PC-9 (cell line): ENCODE measurements at regions of chr6 and their contacts with region 1.

Region 1: GRCh38 chr6:20092071-20092566 is 120.2 kb downstream of the MBOAT1 start:
- DNase-seq: peak; percentile 17 to 49
- H3K4me3 ChIP-seq: no peak overlapping the region
- H3K27ac ChIP-seq: no peak overlapping the region
- H3K4me1 ChIP-seq: no peaks in the 10 kb centered on the region
- H3K27me3 ChIP-seq: no peaks in the 10 kb centered on the region
- CTCF ChIP-seq: peak; percentile 87

Region 2: GRCh38 chr6:20126789-20127653 is 34.9 kb after region 1 on chr6:
- CTCF ChIA-PET with region 1: interaction called, 14 read pairs
- POLR2A ChIA-PET with region 1: no interaction called
- intact Hi-C with region 1: loop called (anchors 1 kb)
- DNase-seq: peak; percentile 40 to 62
- H3K4me3 ChIP-seq: no peak overlapping the region
- H3K27ac ChIP-seq: no peak overlapping the region
- H3K4me1 ChIP-seq: no peaks in the 10 kb centered on the region
- H3K27me3 ChIP-seq: no peaks in the 10 kb centered on the region
- CTCF ChIP-seq: peak; percentile 91

Region 3: GRCh38 chr6:20135677-20136268 is 43.7 kb after region 1 on chr6:
- CTCF ChIA-PET with region 1: interaction called, 10 read pairs
- POLR2A ChIA-PET with region 1: no interaction called
- intact Hi-C with region 1: no loop called
- DNase-seq: no peak
- H3K4me3 ChIP-seq: no peak overlapping the region
- H3K27ac ChIP-seq: no peak overlapping the region
- H3K4me1 ChIP-seq: no peaks in the 10 kb centered on the region
- H3K27me3 ChIP-seq: no peaks in the 10 kb centered on the region
- CTCF ChIP-seq: no peak

Region 4: DNA sequence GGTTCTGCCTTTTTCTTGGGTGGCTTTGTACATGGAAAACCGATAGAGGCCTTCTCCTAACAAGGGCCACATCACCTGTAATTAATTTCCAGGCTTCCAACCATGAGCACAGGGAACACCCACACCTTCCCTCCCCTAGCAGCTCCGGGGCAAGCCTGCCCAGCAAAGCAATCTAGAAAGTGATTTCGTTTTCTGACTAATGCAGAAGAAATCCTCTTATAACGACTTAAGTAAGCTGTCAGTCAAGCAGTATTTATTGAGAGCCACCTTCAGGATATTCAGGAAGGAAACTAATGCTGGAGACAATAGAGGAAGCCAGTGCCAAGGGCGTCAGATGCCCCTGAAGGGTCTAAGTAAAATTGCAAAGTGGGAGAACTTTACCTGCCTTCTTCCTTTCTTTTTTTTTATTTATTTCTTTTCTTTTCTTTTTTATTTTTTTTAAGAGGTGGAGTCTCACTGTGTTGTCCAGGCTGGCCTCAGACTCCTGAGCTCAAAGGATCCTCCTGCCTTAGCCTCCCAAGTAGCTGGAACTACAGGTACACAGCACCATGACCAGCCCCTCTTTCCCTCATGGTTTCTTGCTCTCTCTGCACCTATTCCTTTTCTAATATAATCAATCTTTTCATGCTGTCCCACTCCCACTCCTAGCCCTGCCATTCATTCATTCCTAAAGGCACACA is 187.6 kb after region 1 on chr6:
- CTCF ChIA-PET with region 1: no interaction called
- POLR2A ChIA-PET with region 1: no interaction called
- intact Hi-C with region 1: loop called (anchors 5 kb)
- DNase-seq: peak; percentile 24 to 42
- H3K4me3 ChIP-seq: no peak overlapping the region
- H3K27ac ChIP-seq: no peak overlapping the region
- H3K4me1 ChIP-seq: no peaks in the 10 kb centered on the region
- H3K27me3 ChIP-seq: no peaks in the 10 kb centered on the region
- CTCF ChIP-seq: no peak

Region 5: DNA sequence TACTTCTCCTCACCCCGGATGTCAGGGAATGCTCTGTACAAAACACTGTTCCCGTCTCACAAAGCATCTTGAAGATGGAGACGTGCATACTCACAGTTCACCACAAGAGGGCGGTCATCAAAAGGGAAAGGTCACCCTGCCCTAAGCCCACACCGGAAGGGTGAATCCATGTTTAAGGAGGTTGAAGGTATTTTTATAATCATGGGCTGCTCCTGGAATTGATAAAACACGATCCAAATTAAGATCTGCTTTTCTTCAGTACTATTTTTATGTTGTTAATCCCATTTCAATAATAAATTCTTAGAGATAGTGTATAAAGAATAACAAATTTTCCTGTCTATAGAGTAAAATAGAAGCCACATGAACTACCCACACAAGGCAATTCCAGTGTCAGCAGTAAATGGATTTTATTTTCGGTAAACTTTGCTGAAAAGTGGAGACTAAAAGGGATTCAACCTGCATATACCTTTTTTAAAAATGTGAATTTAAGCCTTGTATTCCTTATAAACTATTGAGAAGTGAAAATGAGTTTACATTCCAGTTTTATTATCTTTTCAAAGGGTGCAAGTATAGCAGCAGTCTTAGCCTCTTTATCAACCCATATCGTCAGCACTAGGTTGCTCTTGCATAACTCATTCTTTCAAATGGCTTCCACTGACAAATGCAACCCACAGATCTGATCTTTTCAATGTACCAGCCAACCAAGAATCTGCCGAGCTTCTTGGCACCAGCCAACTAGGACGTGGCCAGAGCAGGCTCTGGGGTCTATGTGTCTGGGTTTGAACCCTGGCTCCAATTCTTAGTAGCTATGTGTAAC is 199.9 kb after region 1 on chr6:
- CTCF ChIA-PET with region 1: interaction called, 3 read pairs
- POLR2A ChIA-PET with region 1: no interaction called
- intact Hi-C with region 1: loop called (anchors 1 kb)
- DNase-seq: peak; percentile 53 to 71
- H3K4me3 ChIP-seq: no peak overlapping the region
- H3K27ac ChIP-seq: no peak overlapping the region
- H3K4me1 ChIP-seq: no peaks in the 10 kb centered on the region
- H3K27me3 ChIP-seq: no peaks in the 10 kb centered on the region
- CTCF ChIP-seq: peak; percentile 95

Region 6: DNA sequence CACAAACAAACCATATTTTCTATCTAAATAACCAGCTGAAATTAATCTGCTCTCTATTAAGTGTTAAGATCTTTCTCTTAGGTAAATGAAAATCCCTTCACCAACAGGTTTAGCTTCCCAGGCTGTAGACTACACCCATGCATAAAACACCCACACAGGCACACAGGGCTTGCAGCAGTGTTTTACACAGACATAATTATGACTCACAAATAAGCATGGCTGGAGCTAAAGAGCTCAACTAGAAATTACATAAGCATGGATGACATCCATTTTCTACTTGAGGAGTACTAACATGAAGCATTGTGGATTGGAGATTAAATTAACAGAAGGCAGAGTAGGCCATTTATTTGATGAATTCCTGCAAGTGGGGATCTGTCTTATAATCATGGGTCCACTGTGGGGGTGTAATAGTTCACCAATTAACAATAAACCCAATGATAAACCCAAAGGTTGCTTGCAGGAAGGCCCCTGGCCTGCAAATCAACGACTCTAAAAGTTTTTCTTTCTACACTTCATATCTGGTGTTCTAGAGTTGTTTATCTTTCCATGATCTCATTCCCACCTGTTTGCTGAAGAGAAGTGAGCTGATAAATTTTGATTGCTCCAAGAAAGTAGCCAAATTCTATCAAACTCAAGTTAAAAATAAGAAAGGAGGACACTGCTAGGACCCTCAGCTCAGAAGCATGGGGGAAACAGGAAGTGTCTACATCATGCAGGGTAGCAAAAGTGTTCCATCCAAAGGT is 275.8 kb after region 1 on chr6:
- CTCF ChIA-PET with region 1: no interaction called
- POLR2A ChIA-PET with region 1: no interaction called
- intact Hi-C with region 1: no loop called
- DNase-seq: no peak
- H3K4me3 ChIP-seq: no peak overlapping the region
- H3K27ac ChIP-seq: no peak overlapping the region
- H3K4me1 ChIP-seq: no peaks in the 10 kb centered on the region
- H3K27me3 ChIP-seq: no peaks in the 10 kb centered on the region
- CTCF ChIP-seq: no peak

Region 7: GRCh38 chr6:20534295-20535262 is 442.5 kb after region 1 on chr6 and contains the start of gene CDKAL1:
- CTCF ChIA-PET with region 1: no interaction called
- POLR2A ChIA-PET with region 1: no interaction called
- intact Hi-C with region 1: loop called (anchors 1 kb)
- DNase-seq: peak; percentile 79 to 81
- H3K4me3 ChIP-seq: peak within 1 kb of the TSS; percentile 77
- H3K27ac ChIP-seq: peak within 1 kb of the TSS; percentile 58
- H3K4me1 ChIP-seq: peaks cover 13% of the 10 kb centered on the region
- H3K27me3 ChIP-seq: no peaks in the 10 kb centered on the region
- CTCF ChIP-seq: no peak
- total RNA-seq, gene CDKAL1: 11.5 and 16.1 TPM in 2 replicates